PC-3 (cell line): ENCODE measurements at regions of chr7 and their contacts with region 1.

Region 1: GRCh38 chr7:56051339-56052191 is at the starts of genes CCT6A and PSPH:
- DNase-seq: peak; percentile 98
- ATAC-seq: peak; percentile 93
- H3K4me3 ChIP-seq: peak within 1 kb of the TSS; percentile 99
- H3K27ac ChIP-seq: peak within 1 kb of the TSS; percentile 70
- H3K4me1 ChIP-seq: peaks cover 37% of the 10 kb centered on the region
- H3K27me3 ChIP-seq: no peaks in the 10 kb centered on the region
- CTCF ChIP-seq: no peak
- total RNA-seq, gene CCT6A: 316 and 338 TPM in 2 replicates
- total RNA-seq, gene PSPH: 54.0 and 66.3 TPM in 2 replicates

Region 2: DNA sequence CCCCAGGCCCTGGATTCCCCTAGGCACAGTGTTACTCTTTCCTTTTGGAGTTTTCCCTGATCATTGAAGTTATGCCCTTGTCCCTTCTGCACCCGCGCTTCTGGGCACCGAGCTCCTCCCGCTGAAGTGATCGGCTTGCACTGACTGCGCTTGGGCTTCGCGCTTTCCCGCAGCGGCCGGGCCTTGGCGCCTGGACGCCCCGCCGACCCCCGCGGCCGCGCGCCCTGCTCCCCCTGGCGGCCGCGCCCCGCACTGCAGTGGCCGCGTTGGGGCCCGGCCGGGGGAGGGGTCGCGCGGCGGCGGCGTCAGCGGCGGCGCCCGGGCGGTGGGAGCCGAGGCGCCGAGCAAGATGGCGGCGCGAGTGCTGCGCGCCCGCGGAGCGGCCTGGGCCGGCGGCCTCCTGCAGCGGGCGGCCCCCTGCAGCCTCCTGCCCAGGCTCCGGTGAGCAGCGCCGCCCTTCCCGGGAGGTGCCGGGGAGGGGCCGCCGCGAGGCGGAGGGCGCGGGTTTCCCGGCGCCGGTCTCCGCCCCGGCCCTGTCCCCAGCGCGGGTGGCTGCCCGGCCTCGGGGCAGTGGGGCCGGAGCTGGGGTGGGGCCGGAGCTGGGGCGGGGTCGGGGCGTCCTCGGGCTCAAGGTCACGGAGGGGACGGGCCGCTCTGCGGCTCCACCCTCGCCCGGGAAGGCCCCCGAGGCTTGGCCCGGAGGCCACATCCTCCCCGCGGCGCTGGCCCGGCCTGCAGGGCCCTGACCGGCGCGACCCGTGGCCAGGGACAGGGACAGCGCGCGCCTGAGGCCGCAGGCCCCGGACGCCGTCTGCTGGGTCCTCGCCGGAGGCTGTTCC is 87.1 kb before region 1 on chr7 and contains the start of gene NIPSNAP2:
- CTCF ChIA-PET with region 1: no interaction called
- POLR2A ChIA-PET with region 1: no interaction called
- intact Hi-C with region 1: loop called (anchors 5 kb)
- DNase-seq: peak; percentile 71
- ATAC-seq: peak; percentile 63
- H3K4me3 ChIP-seq: peak within 1 kb of the TSS; percentile 84
- H3K27ac ChIP-seq: peak within 1 kb of the TSS; percentile 73
- H3K4me1 ChIP-seq: peaks cover 15% of the 10 kb centered on the region
- H3K27me3 ChIP-seq: no peaks in the 10 kb centered on the region
- CTCF ChIP-seq: peak; percentile 32; the same call in 1 of the 2 replicates
- total RNA-seq, gene NIPSNAP2: 63.9 and 65.8 TPM in 2 replicates

Region 3: DNA sequence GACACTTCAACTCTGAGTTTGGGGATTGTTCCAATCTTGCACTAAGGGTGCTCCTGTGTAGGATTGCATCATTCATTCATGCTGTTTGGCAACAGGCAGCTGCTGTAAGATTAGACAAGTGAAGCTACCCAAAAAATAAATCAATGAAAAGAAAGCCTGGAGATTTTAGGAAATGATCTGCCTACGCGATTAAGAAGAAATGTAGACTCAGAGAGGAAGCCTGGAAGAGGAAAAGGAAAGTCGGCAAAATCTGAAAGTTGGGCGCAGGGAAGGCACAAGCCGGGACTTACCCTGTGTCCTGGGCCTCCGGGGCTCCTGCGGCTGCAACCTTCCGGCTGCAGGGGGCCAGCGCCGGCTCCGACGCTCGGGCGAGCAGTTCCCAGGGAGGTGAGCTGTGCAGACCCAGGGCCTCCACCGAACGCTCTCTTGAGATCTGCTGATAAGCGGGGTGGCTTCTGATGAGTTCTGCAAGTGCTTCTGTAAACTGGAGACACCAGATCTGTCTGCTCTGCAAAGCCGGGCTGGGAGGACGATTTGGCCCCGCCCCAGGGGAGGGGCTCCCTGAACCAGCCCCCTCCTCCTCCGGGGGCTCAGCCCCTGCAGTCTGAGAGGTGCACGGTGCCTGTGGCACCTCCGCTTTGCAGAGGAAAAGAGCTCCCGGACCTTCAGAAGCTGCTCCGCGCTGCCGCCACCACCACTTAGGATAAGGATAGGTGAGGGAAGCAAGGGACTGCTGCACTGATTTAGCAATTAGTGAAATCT is 17.7 kb before region 1 on chr7:
- CTCF ChIA-PET with region 1: interaction called, 6 read pairs
- POLR2A ChIA-PET with region 1: interaction called, 21 read pairs
- intact Hi-C with region 1: loop called (anchors 1 kb)
- DNase-seq: peak; percentile 70
- ATAC-seq: peak; percentile 90
- H3K4me3 ChIP-seq: peak overlapping the region; percentile 69
- H3K27ac ChIP-seq: peak overlapping the region; percentile 35
- H3K4me1 ChIP-seq: no peaks in the 10 kb centered on the region
- H3K27me3 ChIP-seq: no peaks in the 10 kb centered on the region
- CTCF ChIP-seq: no peak

Region 4: GRCh38 chr7:56063882-56064625 is 12.5 kb after region 1 on chr7 and contains the start of gene SUMF2:
- CTCF ChIA-PET with region 1: interaction called, 6 read pairs
- POLR2A ChIA-PET with region 1: interaction called, 12 read pairs
- intact Hi-C with region 1: loop called (anchors 1 kb)
- DNase-seq: peak; percentile 85
- ATAC-seq: peak; percentile 84
- H3K4me3 ChIP-seq: peak within 1 kb of the TSS; percentile 94
- H3K27ac ChIP-seq: peak within 1 kb of the TSS; percentile 60
- H3K4me1 ChIP-seq: peaks cover 44% of the 10 kb centered on the region
- H3K27me3 ChIP-seq: no peaks in the 10 kb centered on the region
- CTCF ChIP-seq: no peak
- total RNA-seq, gene SUMF2: 57.4 and 65.6 TPM in 2 replicates